Naive thymus-derived CD4-positive, alpha-beta T cell (primary cell): ENCODE measurements at regions of chr18 and their contacts with region 1.

Region 1: DNA sequence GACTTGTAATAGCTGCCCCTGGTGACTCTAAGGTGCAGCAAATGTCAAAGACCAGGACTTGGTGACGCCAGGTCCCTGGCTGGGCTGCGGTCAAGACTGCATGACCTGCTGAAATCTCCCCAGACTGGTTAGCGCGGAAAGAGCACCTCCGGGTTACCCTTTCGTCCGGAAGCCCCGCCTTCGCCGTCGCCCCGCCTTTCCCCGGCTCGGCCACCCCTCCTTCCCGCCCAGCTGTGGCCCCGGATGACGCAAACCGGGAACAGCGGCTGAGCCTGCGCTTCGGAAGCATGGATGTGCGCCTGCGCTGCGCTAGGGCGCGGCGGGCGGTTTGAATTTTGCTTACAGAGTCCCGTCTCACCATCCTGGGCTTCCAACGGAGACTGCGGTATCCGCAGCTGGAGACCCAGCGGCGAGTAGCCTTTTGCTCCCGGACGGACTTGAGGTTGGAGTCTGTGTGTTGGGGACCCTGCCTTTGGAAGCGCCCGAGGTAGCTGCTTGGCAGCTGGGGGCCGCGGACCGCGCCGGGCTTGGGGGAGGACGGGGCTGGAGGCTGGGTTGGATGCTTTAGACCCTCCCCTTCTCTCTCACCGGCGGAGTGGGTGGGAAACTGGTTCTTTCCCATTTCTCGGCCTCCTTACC is at the start of gene SKA1:
- DNase-seq: peak; percentile 85 to 92 (median 89)
- ATAC-seq: peak; percentile 99
- H3K4me3 ChIP-seq: peak within 1 kb of the TSS; percentile 62
- H3K4me3 Mint-ChIP-seq: peak within 1 kb of the TSS; percentile 75 to 90 (median 80)
- H3K27ac ChIP-seq: peak within 1 kb of the TSS; percentile 71
- H3K27ac Mint-ChIP-seq: peak within 1 kb of the TSS; percentile 72 to 91 (median 87)
- H3K4me1 ChIP-seq: peaks cover 0 to 13% of the 10 kb centered on the region in 2 donors
- H3K4me1 Mint-ChIP-seq: peaks cover 0 to 34% (median 14%) of the 10 kb centered on the region in 7 donors
- H3K27me3 ChIP-seq: peaks cover 0 to 6% of the 10 kb centered on the region in 2 donors
- H3K27me3 Mint-ChIP-seq: peaks cover 0 to 8% (median 7%) of the 10 kb centered on the region in 5 donors
- total RNA-seq, gene SKA1: 0.27 to 24.8 (median 0.43) TPM

Region 2: GRCh38 chr18:48455555-48456478 is 1919.1 kb before region 1 on chr18:
- CTCF ChIA-PET with region 1: no interaction called
- POLR2A ChIA-PET with region 1: no interaction called
- intact Hi-C with region 1: loop called in 1 of 2 experiments (anchors 5 kb)
- DNase-seq: peak in 8 of 9 donors; percentile 18 to 65 (median 60)
- ATAC-seq: peak; percentile 82
- H3K4me3 ChIP-seq: no peak overlapping the region
- H3K4me3 Mint-ChIP-seq: peak overlapping the region; percentile 19 to 84 (median 70)
- H3K27ac ChIP-seq: no peak overlapping the region
- H3K27ac Mint-ChIP-seq: peak overlapping the region in 8 of 9 donors; percentile 14 to 88 (median 54)
- H3K4me1 ChIP-seq: peaks cover 3 to 36% of the 10 kb centered on the region in 2 donors
- H3K4me1 Mint-ChIP-seq: peaks cover 13 to 47% (median 39%) of the 10 kb centered on the region in 7 donors
- H3K27me3 ChIP-seq: peaks cover 0 to 7% of the 10 kb centered on the region in 2 donors
- H3K27me3 Mint-ChIP-seq: peaks cover 44 to 64% (median 59%) of the 10 kb centered on the region in 5 donors

Region 3: DNA sequence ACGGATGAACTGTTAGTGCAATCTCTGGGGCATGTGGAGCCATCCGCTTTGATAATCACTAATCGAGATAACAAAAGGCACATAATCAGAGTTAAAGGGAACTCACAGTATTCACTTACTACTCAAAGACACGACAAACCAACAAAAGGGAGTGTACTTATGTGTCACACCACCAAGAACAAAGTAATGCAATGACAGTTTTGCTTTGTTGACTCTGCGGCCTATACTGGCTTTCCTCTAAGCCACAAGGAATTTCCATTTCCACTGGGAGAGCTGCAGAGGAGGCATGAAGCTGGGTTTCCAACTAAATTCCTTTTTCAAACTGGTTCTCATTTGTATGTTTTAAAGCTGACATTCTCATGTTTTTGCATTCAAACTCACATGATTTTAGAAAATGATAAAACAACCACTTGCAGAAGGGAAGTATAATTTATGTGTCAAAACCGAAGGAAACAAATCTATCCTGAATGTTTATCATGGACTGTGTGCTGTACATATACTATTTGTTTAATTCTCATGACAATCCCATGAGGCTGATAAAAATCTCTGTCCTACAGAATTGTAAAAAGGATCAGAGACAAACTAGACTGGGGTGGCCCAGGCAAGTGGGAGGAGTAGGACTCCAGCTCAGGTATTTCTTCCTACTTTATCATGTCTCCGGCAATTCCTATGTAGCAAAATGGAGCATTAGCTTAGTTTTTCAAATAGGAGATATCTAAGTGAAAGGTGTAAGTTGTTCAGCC is 1274.5 kb before region 1 on chr18:
- CTCF ChIA-PET with region 1: no interaction called
- POLR2A ChIA-PET with region 1: no interaction called
- intact Hi-C with region 1: no loop called
- DNase-seq: no peak
- ATAC-seq: no peak
- H3K4me3 ChIP-seq: no peak overlapping the region
- H3K4me3 Mint-ChIP-seq: no peak overlapping the region
- H3K27ac ChIP-seq: no peak overlapping the region
- H3K27ac Mint-ChIP-seq: peak overlapping the region in 1 of 9 donors; percentile 5
- H3K4me1 ChIP-seq: no peaks in the 10 kb centered on the region
- H3K4me1 Mint-ChIP-seq: peaks cover 0 to 5% (median 2%) of the 10 kb centered on the region in 7 donors
- H3K27me3 ChIP-seq: no peaks in the 10 kb centered on the region
- H3K27me3 Mint-ChIP-seq: no peaks in the 10 kb centered on the region

Region 4: DNA sequence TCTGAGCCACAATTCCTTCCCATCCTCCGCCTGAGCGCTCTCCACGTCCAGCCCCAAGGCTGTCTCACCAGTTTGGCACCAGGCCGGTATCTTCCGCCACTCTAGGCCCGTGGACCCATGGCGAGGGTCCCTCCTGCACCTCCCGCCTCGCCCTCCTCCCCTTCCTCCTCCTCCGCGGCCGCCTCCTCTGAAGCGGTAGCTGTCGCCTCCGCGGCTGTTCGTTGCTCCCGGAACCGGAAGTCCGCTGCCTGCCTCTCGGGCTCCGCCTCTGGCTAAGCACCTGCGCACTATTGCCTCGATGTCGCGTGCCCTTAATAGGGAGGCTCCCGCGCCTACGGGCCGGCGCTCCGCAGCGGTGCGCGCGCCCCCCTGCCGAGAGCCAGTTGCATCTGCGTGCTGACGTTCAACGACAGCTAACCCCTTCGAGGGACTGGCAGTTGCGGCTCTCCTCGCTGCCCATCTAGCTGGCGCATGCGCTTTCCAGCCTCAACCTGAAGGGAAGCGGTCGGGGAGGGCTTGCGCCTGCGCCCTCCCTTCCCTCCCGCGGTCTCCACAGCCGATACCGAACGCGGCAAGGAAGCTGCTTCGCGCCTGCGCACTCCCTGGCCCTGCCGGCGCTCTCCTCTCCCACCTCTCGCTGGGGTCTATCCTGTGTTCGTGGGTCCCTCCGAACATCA is 93.4 kb before region 1 on chr18 and contains the start of gene MBD1:
- CTCF ChIA-PET with region 1: no interaction called
- POLR2A ChIA-PET with region 1: interaction called, 8 read pairs
- intact Hi-C with region 1: loop called (anchors 1 kb)
- DNase-seq: peak; percentile 90 to 99 (median 97)
- ATAC-seq: peak; percentile 94
- H3K4me3 ChIP-seq: peak within 1 kb of the TSS; percentile 94
- H3K4me3 Mint-ChIP-seq: peak within 1 kb of the TSS; percentile 90 to 99 (median 97)
- H3K27ac ChIP-seq: peak within 1 kb of the TSS; percentile 88
- H3K27ac Mint-ChIP-seq: peak within 1 kb of the TSS; percentile 93 to 99 (median 97)
- H3K4me1 ChIP-seq: peaks cover 21 to 33% of the 10 kb centered on the region in 2 donors
- H3K4me1 Mint-ChIP-seq: peaks cover 24 to 53% (median 45%) of the 10 kb centered on the region in 7 donors
- H3K27me3 ChIP-seq: no peaks in the 10 kb centered on the region
- H3K27me3 Mint-ChIP-seq: peaks cover 0 to 2% (median 0%) of the 10 kb centered on the region in 5 donors
- total RNA-seq, gene MBD1: 97.5 to 158 (median 118) TPM

Region 5: GRCh38 chr18:50307738-50308470 is 67.0 kb before region 1 on chr18:
- CTCF ChIA-PET with region 1: no interaction called
- POLR2A ChIA-PET with region 1: no interaction called
- intact Hi-C with region 1: loop called (anchors 1 kb)
- DNase-seq: peak; percentile 70 to 93 (median 89)
- ATAC-seq: peak; percentile 96
- H3K4me3 ChIP-seq: peak overlapping the region; percentile 45
- H3K4me3 Mint-ChIP-seq: peak overlapping the region; percentile 76 to 97 (median 92)
- H3K27ac ChIP-seq: peak overlapping the region; percentile 65
- H3K27ac Mint-ChIP-seq: peak overlapping the region; percentile 52 to 93 (median 82)
- H3K4me1 ChIP-seq: peaks cover 0 to 8% of the 10 kb centered on the region in 2 donors
- H3K4me1 Mint-ChIP-seq: peaks cover 0 to 20% (median 16%) of the 10 kb centered on the region in 7 donors
- H3K27me3 ChIP-seq: peaks cover 0 to 3% of the 10 kb centered on the region in 2 donors
- H3K27me3 Mint-ChIP-seq: peaks cover 0 to 35% (median 19%) of the 10 kb centered on the region in 5 donors

Region 6: GRCh38 chr18:50401888-50402287 is 27.0 kb after region 1 on chr18:
- CTCF ChIA-PET with region 1: no interaction called
- POLR2A ChIA-PET with region 1: no interaction called
- intact Hi-C with region 1: no loop called
- DNase-seq: peak in 3 of 9 donors; percentile 4 to 23 (median 7)
- ATAC-seq: no peak
- H3K4me3 ChIP-seq: no peak overlapping the region
- H3K4me3 Mint-ChIP-seq: no peak overlapping the region
- H3K27ac ChIP-seq: no peak overlapping the region
- H3K27ac Mint-ChIP-seq: no peak overlapping the region
- H3K4me1 ChIP-seq: no peaks in the 10 kb centered on the region
- H3K4me1 Mint-ChIP-seq: peaks cover 0 to 12% (median 7%) of the 10 kb centered on the region in 7 donors
- H3K27me3 ChIP-seq: peaks cover 0 to 4% of the 10 kb centered on the region in 2 donors
- H3K27me3 Mint-ChIP-seq: peaks cover 59 to 72% (median 67%) of the 10 kb centered on the region in 5 donors

Region 7: DNA sequence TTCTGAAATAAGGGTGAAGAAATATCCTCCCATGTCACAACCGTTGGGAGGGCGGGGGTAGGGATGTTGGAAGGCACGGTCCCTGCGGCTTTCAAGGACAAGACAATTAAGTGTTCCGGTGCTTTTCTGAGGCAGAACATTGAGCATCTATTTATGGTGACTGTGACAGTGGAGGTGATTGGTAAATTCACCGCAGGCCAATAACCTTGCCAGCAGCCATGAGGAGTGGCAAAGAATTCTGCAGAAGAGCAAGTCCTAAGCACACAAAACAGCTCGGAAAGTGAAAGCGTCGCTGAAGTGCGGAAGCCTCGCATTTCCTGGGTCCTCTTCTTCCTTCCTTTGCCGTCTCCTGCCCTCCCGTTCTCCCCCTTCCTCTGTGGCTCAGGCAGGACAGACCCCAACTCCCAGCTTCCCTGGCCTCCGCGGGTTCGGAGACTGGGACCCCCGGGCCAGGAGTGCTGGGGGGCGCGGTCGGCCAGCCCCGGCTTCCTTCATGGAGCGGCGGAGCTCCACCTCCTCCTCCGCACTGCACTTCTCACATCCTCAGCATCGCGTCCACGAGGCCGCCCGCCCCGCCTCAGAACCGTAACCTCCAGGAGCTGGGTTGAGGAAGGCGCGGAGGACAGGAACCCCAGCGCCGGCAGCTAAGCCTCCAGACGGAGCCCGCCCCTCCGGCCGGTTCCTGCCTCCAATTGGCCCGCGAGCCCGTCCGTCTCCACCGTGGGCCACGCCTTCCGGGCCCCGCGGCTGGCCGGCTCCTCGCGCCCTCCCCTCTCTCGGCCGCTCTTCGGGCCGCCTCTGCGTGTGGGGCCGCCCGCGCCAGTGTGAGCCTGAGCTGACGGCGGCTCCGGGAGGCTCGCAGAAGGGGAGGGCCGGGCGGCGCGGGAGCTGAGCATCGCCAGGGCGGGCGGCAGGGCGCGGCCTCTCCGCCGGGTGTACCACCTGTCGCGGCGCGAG is 503.8 kb after region 1 on chr18 and contains the start of gene ME2:
- CTCF ChIA-PET with region 1: no interaction called
- POLR2A ChIA-PET with region 1: no interaction called
- intact Hi-C with region 1: loop called in 1 of 2 experiments (anchors 10 kb)
- DNase-seq: peak; percentile 82 to 95 (median 89)
- ATAC-seq: peak; percentile 94
- H3K4me3 ChIP-seq: peak within 1 kb of the TSS; percentile 61
- H3K4me3 Mint-ChIP-seq: peak within 1 kb of the TSS; percentile 95 to 99 (median 97)
- H3K27ac ChIP-seq: peak within 1 kb of the TSS; percentile 98
- H3K27ac Mint-ChIP-seq: peak within 1 kb of the TSS; percentile 93 to 99 (median 98)
- H3K4me1 ChIP-seq: peaks cover 17% of the 10 kb centered on the region in 2 donors
- H3K4me1 Mint-ChIP-seq: peaks cover 18 to 37% (median 34%) of the 10 kb centered on the region in 7 donors
- H3K27me3 ChIP-seq: no peaks in the 10 kb centered on the region
- H3K27me3 Mint-ChIP-seq: peaks cover 0 to 11% (median 4%) of the 10 kb centered on the region in 5 donors
- total RNA-seq, gene ME2: 29.4 to 84.7 (median 43.2) TPM

Region 8: GRCh38 chr18:50967714-50968661 is 593.1 kb after region 1 on chr18 and contains the start of gene ELAC1:
- CTCF ChIA-PET with region 1: no interaction called
- POLR2A ChIA-PET with region 1: interaction called, 3 read pairs
- intact Hi-C with region 1: loop called in 1 of 2 experiments (anchors 10 kb)
- DNase-seq: peak; percentile 48 to 75 (median 65)
- ATAC-seq: peak; percentile 93
- H3K4me3 ChIP-seq: peak within 1 kb of the TSS; percentile 80
- H3K4me3 Mint-ChIP-seq: peak within 1 kb of the TSS; percentile 86 to 98 (median 94)
- H3K27ac ChIP-seq: peak within 1 kb of the TSS; percentile 90
- H3K27ac Mint-ChIP-seq: peak within 1 kb of the TSS; percentile 77 to 95 (median 92)
- H3K4me1 ChIP-seq: peaks cover 8 to 13% of the 10 kb centered on the region in 2 donors
- H3K4me1 Mint-ChIP-seq: peaks cover 15 to 35% (median 29%) of the 10 kb centered on the region in 7 donors
- H3K27me3 ChIP-seq: no peaks in the 10 kb centered on the region
- H3K27me3 Mint-ChIP-seq: no peaks in the 10 kb centered on the region
- total RNA-seq, gene ELAC1: 4.3 to 11.2 (median 6.3) TPM

Region 9: GRCh38 chr18:51029694-51030536 is 655.0 kb after region 1 on chr18 and contains the start of gene SMAD4:
- CTCF ChIA-PET with region 1: no interaction called
- POLR2A ChIA-PET with region 1: no interaction called
- intact Hi-C with region 1: loop called (anchors 2 kb)
- DNase-seq: peak; percentile 95 to 99 (median 97)
- ATAC-seq: peak; percentile 89
- H3K4me3 ChIP-seq: peak within 1 kb of the TSS; percentile 63
- H3K4me3 Mint-ChIP-seq: peak within 1 kb of the TSS; percentile 96 to 100 (median 99)
- H3K27ac ChIP-seq: peak within 1 kb of the TSS; percentile 81
- H3K27ac Mint-ChIP-seq: peak within 1 kb of the TSS; percentile 95 to 100 (median 98)
- H3K4me1 ChIP-seq: peaks cover 13 to 40% of the 10 kb centered on the region in 2 donors
- H3K4me1 Mint-ChIP-seq: peaks cover 35 to 62% (median 57%) of the 10 kb centered on the region in 7 donors
- H3K27me3 ChIP-seq: no peaks in the 10 kb centered on the region
- H3K27me3 Mint-ChIP-seq: no peaks in the 10 kb centered on the region
- total RNA-seq, gene SMAD4: 82.5 to 170 (median 92.5) TPM